Calu3 (cell line): ENCODE measurements at regions of chr22 and their contacts with region 1.

Region 1: DNA sequence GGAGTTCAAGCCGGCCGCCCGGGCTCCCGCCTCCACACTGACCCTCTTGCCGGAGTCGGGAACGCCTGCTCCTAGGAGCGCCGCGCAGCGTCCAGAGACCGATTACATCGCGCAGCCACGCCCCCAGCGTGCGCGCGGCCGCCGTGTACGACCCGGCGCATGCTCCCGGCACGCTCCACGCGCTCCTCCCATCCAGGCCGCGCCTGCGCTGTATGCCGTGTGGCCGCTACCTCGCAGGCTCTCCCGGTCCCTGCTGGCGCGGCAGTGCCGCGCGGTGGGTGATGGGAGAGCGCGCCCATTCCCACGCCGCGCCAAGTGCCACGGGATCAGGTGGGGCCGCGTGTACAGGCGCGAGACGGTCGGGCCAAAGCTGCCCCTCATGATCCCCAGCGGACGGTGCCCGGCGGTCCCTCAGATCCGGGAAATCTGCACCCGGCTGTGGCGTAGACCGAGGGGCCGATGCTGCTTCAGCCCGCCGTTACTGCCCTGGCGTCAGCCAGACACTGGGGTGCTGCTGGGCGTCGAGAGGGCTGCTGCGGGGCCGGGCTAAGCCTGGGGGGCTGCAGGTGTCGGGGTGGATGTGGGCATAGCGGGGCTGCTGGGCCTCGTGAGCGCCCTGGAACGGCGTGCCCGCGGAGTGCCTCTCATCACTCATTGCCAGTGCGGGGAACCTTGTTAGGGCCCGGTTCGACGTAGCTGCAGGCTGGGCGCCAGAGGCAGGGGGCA is at the starts of genes GNB1L and RTL10:
- DNase-seq: peak; percentile 96
- H3K4me3 Mint-ChIP-seq: peak within 1 kb of the TSS; percentile 95
- H3K27ac Mint-ChIP-seq: peak within 1 kb of the TSS; percentile 28
- H3K4me1 Mint-ChIP-seq: peaks cover 39% of the 10 kb centered on the region
- H3K27me3 Mint-ChIP-seq: no peaks in the 10 kb centered on the region
- CTCF ChIP-seq: no peak
- total RNA-seq, gene GNB1L: 9.1 and 13.0 TPM in 2 replicates
- total RNA-seq, gene RTL10: 26.2 and 28.7 TPM in 2 replicates

Region 2: DNA sequence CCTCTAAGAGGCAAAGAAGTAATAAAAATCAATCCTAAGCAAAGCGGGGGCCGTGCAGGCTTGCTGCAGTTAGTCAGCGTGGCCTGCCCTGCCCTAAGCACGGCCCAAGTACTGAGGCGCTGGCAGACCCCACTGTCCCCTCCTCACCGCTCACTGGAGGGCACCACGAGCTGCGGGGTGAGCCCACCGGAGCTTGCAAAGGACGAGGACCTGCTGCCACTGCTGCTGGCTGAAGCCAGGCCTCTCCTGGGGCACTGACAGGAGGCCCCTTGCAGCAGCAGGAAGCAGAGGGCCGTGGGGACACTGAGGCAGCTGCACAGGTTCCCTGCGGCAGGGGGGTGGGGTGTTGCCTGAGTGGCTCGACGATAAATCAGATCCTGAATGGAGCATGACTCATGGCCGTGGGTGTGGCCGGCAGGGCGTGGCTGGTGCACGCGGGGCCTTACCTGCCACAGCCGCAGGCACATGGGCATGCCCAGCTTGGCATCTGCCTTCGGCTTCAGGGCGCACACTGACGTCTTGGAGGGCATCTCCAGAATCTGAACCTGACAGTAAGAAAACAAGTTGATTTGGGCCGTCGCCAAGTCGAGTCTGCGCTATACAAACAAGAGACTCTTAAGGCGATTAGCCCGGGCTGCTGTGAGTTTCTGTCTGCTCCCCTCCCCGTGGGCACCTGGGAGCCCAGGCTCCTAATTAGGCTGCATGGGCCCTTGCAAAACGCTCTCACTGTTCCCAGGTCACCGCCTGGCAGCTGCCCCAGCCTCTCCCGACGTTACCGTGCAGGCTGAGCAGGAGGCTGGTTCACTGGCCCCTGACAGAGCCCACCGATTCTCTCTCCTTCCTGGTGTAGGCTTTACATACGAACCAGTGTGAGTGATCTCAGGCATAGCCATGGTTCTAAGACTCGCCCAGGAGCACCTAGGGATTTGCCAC is 48.5 kb before region 1 on chr22:
- CTCF ChIA-PET with region 1: interaction called, 4 read pairs
- intact Hi-C with region 1: loop called (anchors 2 kb)
- DNase-seq: peak; percentile 89
- H3K4me3 Mint-ChIP-seq: peak overlapping the region; percentile 20
- H3K27ac Mint-ChIP-seq: no peak overlapping the region
- H3K4me1 Mint-ChIP-seq: peaks cover 19% of the 10 kb centered on the region
- H3K27me3 Mint-ChIP-seq: no peaks in the 10 kb centered on the region
- CTCF ChIP-seq: no peak

Region 3: DNA sequence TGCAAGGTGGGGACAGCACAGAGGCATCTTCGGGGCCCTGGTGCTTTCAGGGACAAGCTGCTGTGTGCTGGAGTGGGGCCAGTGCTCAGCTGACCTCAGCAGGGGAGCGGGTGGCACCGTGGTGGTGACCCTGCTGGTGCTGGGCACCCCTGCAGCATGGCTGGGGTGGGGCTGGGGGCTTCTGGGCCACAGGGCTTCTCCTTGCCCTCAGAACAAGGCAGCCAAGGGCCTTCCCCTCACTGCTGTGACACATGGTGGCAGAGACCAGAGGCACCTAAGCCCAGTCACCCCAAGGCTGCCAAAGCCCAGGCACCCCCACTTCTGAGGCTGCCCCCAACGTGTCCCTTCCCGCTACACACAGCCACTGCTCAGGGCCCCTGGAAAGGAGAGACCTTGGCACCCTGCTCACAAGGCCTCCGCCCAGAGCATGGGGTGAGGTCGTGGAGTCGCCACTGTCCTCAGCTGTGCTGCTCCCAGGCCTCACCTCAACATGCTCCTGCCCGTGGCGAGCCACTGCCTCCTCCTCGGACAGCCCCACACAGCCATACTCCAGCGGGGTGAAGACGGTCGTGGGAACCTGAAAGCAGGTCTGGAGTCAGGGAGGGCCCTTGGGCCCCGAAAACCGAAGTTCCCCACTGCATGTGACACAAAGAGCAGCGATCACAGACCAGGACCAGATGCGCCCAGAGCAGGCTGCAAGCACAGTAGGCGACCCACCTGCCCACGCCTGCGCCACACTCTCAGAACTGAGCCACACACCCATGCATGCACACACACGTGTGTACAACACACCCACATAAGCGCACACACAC is 25.0 kb after region 1 on chr22:
- CTCF ChIA-PET with region 1: interaction called, 5 read pairs
- intact Hi-C with region 1: loop called (anchors 2 kb)
- DNase-seq: no peak
- H3K4me3 Mint-ChIP-seq: no peak overlapping the region
- H3K27ac Mint-ChIP-seq: no peak overlapping the region
- H3K4me1 Mint-ChIP-seq: peaks cover 23% of the 10 kb centered on the region
- H3K27me3 Mint-ChIP-seq: no peaks in the 10 kb centered on the region
- CTCF ChIP-seq: no peak

Region 4: DNA sequence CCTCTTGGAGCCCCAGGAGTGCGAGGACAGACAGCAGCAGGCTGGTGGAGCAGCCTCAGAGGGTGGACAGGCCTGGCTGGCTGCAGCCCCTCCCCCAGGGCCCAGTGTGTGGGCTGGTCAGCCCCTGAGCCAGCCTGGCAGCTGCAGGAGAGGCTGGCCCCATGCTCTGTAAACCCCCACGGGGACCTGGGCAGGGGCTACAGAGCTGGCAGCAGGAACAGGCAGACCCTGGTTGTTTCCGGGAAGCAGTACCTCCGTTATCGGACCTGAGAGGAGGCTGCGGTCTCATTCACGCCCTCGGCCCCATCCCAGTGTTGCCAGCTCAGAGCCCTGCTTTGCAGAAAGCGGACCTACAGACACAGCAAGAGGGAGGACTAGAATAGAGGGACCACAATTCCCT is 48.1 kb after region 1 on chr22:
- CTCF ChIA-PET with region 1: no interaction called
- intact Hi-C with region 1: no loop called
- DNase-seq: no peak
- H3K4me3 Mint-ChIP-seq: no peak overlapping the region
- H3K27ac Mint-ChIP-seq: no peak overlapping the region
- H3K4me1 Mint-ChIP-seq: no peaks in the 10 kb centered on the region
- H3K27me3 Mint-ChIP-seq: no peaks in the 10 kb centered on the region
- CTCF ChIP-seq: no peak